ENCODE measurements at regions of chr1 and their contacts with region 1.

Region 1: GRCh38 chr1:206912445-206913095 is 9.2 kb downstream of the FCMR start:
- DNase-seq: peak; percentile 80
- CTCF ChIP-seq: peak; percentile 76

Region 2: GRCh38 chr1:206734499-206735142 is 177.9 kb before region 1 on chr1:
- in situ Hi-C with region 1: loop called (anchors 5 kb)
- DNase-seq: peak; percentile 76
- CTCF ChIP-seq: peak; percentile 87

Region 3: DNA sequence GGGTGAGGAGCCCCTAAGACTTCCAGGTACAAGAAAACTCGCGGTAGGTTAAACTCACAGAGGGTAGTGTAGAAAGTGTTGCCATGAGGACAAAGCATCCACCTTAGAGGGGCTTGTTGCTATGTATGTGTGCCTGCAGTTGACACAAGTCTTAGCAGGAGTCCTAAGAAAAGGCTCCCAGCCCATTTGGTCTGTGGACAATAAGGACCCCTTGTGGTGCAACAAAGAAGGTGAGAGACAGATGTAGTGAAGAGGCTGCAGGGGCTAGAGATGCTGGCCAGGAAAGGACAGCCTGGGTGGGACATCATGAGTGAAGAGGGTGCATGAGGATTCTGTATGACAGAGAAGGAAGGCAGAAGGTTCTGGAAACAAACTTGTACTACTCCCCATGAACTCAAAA is 104.0 kb before region 1 on chr1:
- in situ Hi-C with region 1: loop called (anchors 5 kb)
- DNase-seq: no peak
- CTCF ChIP-seq: peak; percentile 68

Region 4: DNA sequence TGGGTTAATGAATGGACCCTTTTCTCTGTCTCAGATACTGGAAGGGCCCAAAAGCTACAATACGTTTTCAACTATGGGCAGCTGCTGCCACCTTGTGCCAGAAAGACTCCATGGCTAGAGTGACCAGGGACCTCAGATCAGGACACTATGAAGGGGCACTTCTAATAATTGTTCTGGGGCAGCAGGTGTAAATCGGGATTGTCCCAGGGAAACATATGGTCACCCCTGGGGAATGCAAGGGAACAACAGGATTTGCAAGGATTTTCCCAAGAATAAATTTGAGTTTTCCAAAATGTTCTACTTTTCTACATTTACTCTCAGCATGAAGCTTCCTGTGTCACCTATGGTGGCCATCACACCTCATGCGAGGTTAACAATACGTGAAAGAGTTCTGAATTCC is 69.6 kb after region 1 on chr1:
- in situ Hi-C with region 1: loop called (anchors 5 kb)
- DNase-seq: peak; percentile 67
- CTCF ChIP-seq: peak; percentile 82

Measured in GM13977 (cell line).